ENCODE measurements at regions of chr7 and their contacts with region 1.

Region 1: GRCh38 chr7:129224251-129225205 is at the start of gene AHCYL2:
- DNase-seq: peak; percentile 98
- H3K4me3 ChIP-seq: peak within 1 kb of the TSS; percentile 82 to 87
- H3K27ac ChIP-seq: peak within 1 kb of the TSS; percentile 88 to 99
- H3K4me1 ChIP-seq: peaks cover 21% of the 10 kb centered on the region
- H3K27me3 ChIP-seq: no peaks in the 10 kb centered on the region
- CTCF ChIP-seq: no peak
- POLR2A ChIP-seq: no peak
- total RNA-seq, gene AHCYL2: 46.1 to 61.3 TPM

Region 2: GRCh38 chr7:129045682-129046081 is 178.8 kb before region 1 on chr7:
- intact Hi-C with region 1: no loop called
- DNase-seq: no peak
- H3K4me3 ChIP-seq: no peak overlapping the region
- H3K27ac ChIP-seq: no peak overlapping the region
- H3K4me1 ChIP-seq: no peaks in the 10 kb centered on the region
- H3K27me3 ChIP-seq: no peaks in the 10 kb centered on the region
- CTCF ChIP-seq: no peak
- POLR2A ChIP-seq: no peak

Region 3: DNA sequence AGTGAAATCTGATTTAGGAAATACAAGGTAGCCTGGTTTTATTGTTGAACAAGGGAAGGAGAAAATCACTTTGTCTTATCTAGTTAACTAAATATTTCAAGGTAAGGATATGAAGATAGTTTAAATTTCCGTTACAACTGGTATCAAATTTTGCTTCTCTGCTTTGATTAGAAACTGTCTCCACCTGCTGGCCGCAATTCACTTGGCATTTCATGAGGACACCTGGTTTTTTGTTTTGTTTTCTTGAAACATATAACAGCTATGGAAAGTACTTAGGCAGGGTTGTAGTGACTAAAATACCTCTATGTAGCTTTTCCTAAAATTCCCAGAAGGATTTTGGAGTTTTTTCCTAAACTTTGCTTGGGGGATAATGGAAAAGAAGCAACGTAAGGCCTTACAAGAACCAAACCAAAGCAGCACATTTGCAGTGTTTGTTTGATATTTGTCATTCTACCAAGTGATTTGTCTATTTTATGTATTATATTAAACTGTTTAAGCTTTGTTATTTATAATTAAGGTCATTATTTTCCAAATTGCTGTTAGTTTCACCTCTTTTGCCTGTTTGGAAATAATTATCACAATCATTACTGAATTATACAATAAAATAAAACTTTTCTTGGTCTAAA is 73.9 kb after region 1 on chr7:
- intact Hi-C with region 1: loop called (anchors 10 kb)
- DNase-seq: peak; percentile 77
- H3K4me3 ChIP-seq: no peak overlapping the region
- H3K27ac ChIP-seq: no peak overlapping the region
- H3K4me1 ChIP-seq: peaks cover 4% of the 10 kb centered on the region
- H3K27me3 ChIP-seq: no peaks in the 10 kb centered on the region
- CTCF ChIP-seq: peak; percentile 55 to 70 (median 65)
- POLR2A ChIP-seq: no peak